Activated CD8-positive, alpha-beta memory T cell treated with anti-CD3 and anti-CD28 coated beads, Interleukin-2, amount 10 ng/mL, durations not matched to agents 7 days and 5 days (primary cell): ENCODE measurements at regions of chr2 and their contacts with region 1.

Region 1: GRCh38 chr2:84925724-84926376 is 20.4 kb downstream of the TMSB10 start:
- DNase-seq: peak; percentile 99
- ATAC-seq: peak; percentile 87
- H3K4me3 Mint-ChIP-seq: peak overlapping the region; percentile 85
- H3K27ac Mint-ChIP-seq: peak overlapping the region; percentile 84
- H3K4me1 Mint-ChIP-seq: peaks cover 40% of the 10 kb centered on the region
- H3K27me3 Mint-ChIP-seq: no peaks in the 10 kb centered on the region

Region 2: GRCh38 chr2:84735389-84735788 is 190.5 kb before region 1 on chr2:
- CTCF ChIA-PET with region 1: no interaction called
- DNase-seq: no peak
- ATAC-seq: no peak
- H3K4me3 Mint-ChIP-seq: no peak overlapping the region
- H3K27ac Mint-ChIP-seq: no peak overlapping the region
- H3K4me1 Mint-ChIP-seq: no peaks in the 10 kb centered on the region
- H3K27me3 Mint-ChIP-seq: no peaks in the 10 kb centered on the region

Region 3: DNA sequence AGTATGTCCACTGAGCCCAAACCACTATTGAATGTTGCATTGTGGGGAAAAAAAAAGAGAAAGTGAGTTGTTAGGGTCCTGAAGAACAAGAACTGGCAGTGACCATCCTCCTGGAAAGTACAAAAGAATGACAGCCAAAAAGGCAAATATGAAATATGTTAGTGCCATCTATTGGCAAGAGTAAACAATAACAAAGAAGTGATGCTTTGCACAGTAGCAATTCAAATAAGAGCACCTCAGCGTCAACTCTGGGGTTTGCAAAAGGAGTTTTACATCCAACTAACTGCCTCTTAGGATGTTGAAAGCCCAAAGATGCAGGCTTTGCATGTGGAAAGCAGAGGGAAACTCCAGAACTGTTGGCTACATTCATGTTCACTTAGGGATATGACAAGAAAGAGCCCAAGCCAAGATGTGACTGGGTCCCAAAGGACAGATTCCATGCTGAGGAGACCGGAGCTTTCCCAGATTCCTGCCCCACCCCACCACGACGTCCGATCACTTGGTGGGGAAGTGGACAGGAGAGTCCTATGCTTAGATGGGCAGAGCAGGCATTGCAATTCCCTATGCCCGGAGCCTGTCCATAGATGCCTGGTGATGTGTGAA is 60.6 kb before region 1 on chr2:
- CTCF ChIA-PET with region 1: interaction called, 19 read pairs
- DNase-seq: no peak
- ATAC-seq: peak; percentile 72
- H3K4me3 Mint-ChIP-seq: no peak overlapping the region
- H3K27ac Mint-ChIP-seq: peak overlapping the region; percentile 45
- H3K4me1 Mint-ChIP-seq: peaks cover 29% of the 10 kb centered on the region
- H3K27me3 Mint-ChIP-seq: no peaks in the 10 kb centered on the region

Region 4: DNA sequence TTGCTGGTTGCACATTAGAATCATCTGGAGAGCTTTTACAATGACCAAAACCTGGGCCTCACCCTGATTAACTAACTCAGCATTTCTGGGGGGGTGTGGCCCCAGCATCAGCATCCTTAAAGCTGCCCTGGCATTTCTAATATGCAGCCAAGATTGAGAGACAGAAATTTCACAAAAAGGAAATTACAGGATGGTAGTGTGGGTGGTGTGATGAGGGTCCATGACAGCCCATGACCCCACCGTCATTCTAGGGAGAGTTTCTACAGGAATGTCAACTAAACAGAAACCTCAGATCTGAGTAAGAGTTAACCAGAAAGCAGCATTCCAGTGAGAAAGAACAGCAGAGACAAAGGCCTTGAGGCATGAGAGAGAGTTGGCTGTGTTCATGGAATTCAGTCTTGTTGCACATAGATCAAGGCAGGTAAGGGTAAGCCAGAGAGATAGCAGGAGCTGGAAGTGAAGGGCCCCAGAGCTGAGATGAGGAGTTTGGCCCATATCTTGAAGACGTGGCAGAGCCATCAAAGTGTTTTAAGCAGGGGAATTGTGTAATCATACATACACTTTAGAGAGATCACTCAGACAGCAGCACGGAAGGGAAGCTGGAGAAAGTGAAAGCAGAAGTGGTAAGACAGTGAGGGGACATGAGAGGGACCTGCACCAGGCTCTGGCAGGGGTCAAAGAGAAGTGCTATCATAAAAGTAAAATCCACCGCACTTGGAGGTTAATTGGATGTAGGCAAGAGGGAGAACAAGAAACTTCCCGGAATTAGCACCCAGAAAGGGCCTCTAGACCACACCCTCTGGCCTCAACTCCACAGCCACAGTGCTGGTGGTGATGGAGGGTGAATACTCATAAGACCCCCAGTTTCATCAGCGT is 37.2 kb before region 1 on chr2:
- CTCF ChIA-PET with region 1: interaction called, 143 read pairs
- DNase-seq: peak; percentile 84
- ATAC-seq: peak; percentile 92
- H3K4me3 Mint-ChIP-seq: peak overlapping the region; percentile 72
- H3K27ac Mint-ChIP-seq: peak overlapping the region; percentile 97
- H3K4me1 Mint-ChIP-seq: peaks cover 53% of the 10 kb centered on the region
- H3K27me3 Mint-ChIP-seq: no peaks in the 10 kb centered on the region

Region 5: GRCh38 chr2:84912984-84913383 is 12.9 kb before region 1 on chr2:
- CTCF ChIA-PET with region 1: interaction called, 116 read pairs
- DNase-seq: no peak
- ATAC-seq: no peak
- H3K4me3 Mint-ChIP-seq: no peak overlapping the region
- H3K27ac Mint-ChIP-seq: no peak overlapping the region
- H3K4me1 Mint-ChIP-seq: peaks cover 30% of the 10 kb centered on the region
- H3K27me3 Mint-ChIP-seq: no peaks in the 10 kb centered on the region

Region 6: GRCh38 chr2:84970868-84971509 is 45.1 kb after region 1 on chr2 and contains the start of gene KCMF1:
- CTCF ChIA-PET with region 1: interaction called, 28 read pairs
- DNase-seq: peak; percentile 82
- ATAC-seq: peak; percentile 63
- H3K4me3 Mint-ChIP-seq: peak within 1 kb of the TSS; percentile 100
- H3K27ac Mint-ChIP-seq: peak within 1 kb of the TSS; percentile 100
- H3K4me1 Mint-ChIP-seq: peaks cover 48% of the 10 kb centered on the region
- H3K27me3 Mint-ChIP-seq: no peaks in the 10 kb centered on the region
- total RNA-seq, gene KCMF1: 78.2 to 89.0 TPM